Esophagus squamous epithelium (tissue), 5 donors: ENCODE measurements at regions of chr22 and their contacts with region 1.

Region 1: DNA sequence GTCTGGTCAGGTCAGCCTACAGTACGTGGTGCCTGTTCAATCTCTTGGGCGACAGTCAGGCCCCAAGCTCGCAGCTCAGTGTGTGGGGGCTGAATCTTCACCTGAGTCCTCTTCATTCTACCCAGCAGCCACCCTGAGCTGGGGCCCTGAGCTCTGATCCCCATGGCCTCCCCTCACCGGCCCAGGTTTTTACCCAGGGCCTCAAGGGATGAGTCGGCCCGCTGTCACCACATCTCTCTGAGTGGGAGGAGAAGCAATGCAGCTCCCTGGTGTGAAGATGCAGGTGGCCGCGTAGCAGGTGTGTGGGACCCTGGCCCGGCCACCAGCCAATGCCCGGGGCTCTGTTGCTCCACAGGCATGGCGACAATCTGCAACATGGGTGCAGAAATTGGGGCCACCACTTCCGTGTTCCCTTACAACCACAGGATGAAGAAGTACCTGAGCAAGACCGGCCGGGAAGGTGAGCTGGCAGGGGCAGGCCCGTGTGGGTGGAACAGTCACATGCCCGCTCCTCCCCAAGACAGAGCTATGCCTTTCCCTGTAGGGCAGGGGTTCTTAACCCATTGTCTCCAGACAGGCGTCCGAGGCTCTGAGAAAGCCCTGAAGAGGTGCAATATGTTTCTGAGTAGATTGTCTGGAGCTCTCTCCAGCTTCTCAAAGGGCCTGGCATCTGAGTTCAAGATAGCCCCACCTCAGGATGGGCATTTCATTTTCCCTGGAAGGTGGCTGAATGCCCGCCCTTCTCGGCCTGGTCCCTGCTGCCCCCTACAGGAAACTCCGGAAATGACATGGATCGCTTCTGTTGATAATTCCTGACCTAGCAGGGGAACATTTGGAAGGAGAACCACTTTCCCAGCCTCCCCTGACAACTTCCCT is 26.9 kb downstream of the POLR3H start:
- DNase-seq: no peak
- H3K4me3 ChIP-seq: no peak overlapping the region
- H3K27ac ChIP-seq: peak overlapping the region; percentile 37 to 73 (median 66)
- H3K4me1 ChIP-seq: peaks cover 18 to 33% (median 24%) of the 10 kb centered on the region in 3 donors
- H3K27me3 ChIP-seq: no peaks in the 10 kb centered on the region
- CTCF ChIP-seq: peak; percentile 54 to 93 (median 90)
- POLR2A ChIP-seq: no peak

Region 2: GRCh38 chr22:41381329-41382097 is 135.9 kb before region 1 on chr22 and contains the start of gene TEF:
- intact Hi-C with region 1: no loop called
- DNase-seq: peak; percentile 97
- H3K4me3 ChIP-seq: peak within 1 kb of the TSS; percentile 72 to 93 (median 77)
- H3K27ac ChIP-seq: peak within 1 kb of the TSS; percentile 97 to 99 (median 98)
- H3K4me1 ChIP-seq: peaks cover 9 to 58% (median 27%) of the 10 kb centered on the region in 3 donors
- H3K27me3 ChIP-seq: no peaks in the 10 kb centered on the region
- CTCF ChIP-seq: no peak
- POLR2A ChIP-seq: peak in 3 of 4 donors; percentile 47 to 85 (median 53)
- total RNA-seq, gene TEF: 3.0 to 17.4 (median 9.7) TPM

Region 3: DNA sequence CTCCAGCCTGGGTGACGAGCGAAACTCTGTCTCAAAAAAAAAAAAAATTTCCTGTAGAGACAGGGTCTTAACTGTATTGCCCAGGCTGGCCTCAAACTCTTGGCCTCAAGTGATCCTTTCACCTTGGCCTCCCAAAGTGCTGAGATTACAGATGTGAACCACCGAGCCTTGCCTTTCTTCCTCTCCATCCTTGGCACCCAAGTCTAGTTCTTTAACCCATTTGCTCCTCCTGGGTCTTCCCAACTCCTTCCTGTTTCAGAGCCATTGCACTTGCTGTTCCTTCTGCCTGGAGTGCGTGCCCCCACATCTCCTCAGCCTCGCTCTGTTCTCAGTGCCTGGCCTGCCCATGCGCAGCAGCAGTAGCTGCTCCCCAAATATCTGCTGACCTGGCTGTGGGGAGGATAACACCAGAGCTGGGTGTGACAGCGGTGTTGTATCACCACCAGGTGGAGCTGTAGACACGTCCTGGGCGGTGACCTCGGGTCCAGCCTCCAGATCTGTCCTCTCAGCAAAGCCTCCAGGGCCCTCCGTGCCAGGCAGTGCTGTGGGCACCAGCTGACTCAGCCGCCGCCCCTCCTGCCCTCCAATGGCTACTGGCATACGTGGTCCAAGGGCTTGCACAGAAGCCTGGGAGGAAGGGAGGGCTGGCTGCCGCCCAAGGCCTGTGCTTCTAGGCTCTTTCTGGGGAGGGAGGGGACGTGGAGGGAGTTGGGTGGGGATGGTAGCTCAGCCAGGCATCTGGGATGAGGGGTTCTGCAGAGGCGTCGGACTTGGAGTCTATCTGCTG is 113.7 kb before region 1 on chr22:
- intact Hi-C with region 1: loop called (anchors 5 kb)
- DNase-seq: peak; percentile 31
- H3K4me3 ChIP-seq: peak overlapping the region in 1 of 4 donors; percentile 24
- H3K27ac ChIP-seq: peak overlapping the region; percentile 11 to 69 (median 58)
- H3K4me1 ChIP-seq: peaks cover 5 to 28% (median 17%) of the 10 kb centered on the region in 3 donors
- H3K27me3 ChIP-seq: no peaks in the 10 kb centered on the region
- CTCF ChIP-seq: peak; percentile 85 to 98 (median 98)
- POLR2A ChIP-seq: no peak